Left colon (tissue), 2 donors: ENCODE measurements at regions of chr10 and their contacts with region 1.

Region 1: GRCh38 chr10:13371897-13372470 is 23.9 kb upstream of the SEPHS1 start:
- DNase-seq: peak; percentile 56 to 59
- ATAC-seq: peak; percentile 99

Region 2: DNA sequence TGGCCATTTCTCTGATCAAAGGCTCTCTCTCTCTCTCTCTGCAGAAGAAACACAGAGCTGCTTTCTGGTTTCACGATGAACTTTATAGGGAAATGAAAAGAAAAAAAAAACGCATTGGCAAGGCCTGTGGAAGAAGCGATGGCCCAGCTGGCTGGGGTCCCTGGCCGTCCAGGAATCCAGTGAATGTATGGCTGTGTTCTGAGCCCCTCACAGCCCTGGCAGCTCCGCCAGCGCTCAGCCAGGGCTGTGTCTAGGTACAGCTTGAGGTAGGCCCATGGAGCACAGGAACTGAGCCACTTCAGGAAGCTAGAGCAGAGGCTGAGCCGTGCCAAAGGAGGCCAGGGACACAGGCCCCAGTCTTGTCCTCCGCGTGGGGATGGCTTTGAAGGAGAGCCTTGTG is 124.7 kb before region 1 on chr10:
- intact Hi-C with region 1: no loop called
- DNase-seq: no peak
- ATAC-seq: no peak

Region 3: GRCh38 chr10:13440185-13441061 is 68.4 kb after region 1 on chr10:
- intact Hi-C with region 1: loop called in 1 of 2 experiments (anchors 5 kb)
- DNase-seq: peak; percentile 37 to 73
- ATAC-seq: peak; percentile 94

Region 4: GRCh38 chr10:13536674-13537366 is 164.8 kb after region 1 on chr10:
- intact Hi-C with region 1: loop called in 1 of 2 experiments (anchors 10 kb)
- DNase-seq: peak in 1 of 2 donors; percentile 57
- ATAC-seq: peak; percentile 91